GM12878 (cell line): ENCODE measurements at regions of chr16 and their contacts with region 1.

Region 1: DNA sequence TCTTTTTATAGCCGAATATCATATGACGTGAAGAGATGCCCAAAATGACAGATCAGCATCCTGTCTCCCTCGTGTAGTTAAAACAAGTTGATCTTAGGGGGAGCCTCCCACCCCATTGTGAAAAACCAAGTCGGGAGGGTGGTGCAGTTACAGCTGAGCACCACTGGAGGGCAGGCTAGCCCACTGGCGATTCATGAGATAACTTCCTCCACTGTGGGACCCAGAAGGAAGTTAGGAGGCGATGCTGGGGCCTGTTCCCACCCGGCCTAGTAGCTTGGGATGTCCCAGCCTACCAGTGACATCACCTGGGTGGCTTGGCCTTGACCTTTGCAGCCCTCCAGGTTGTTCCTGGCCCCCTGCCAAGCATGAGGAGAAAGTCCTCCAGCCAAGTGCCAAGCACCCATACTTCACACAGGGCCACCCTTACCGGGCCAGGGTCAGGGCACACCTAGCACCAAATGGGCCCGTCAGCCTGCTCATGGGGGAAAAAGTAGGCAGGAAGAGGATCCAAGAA is 8.1 kb upstream of the CPNE2 start:
- DNase-seq: peak; percentile 25
- ATAC-seq: peak; percentile 89
- H3K4me3 ChIP-seq: no peak overlapping the region
- H3K27ac ChIP-seq: no peak overlapping the region
- H3K4me1 ChIP-seq: no peaks in the 10 kb centered on the region
- H3K27me3 ChIP-seq: no peaks in the 10 kb centered on the region
- CTCF ChIP-seq: peak; percentile 95 to 100 (median 98)
- EP300 ChIP-seq: no peak
- POLR2A ChIP-seq: peak; percentile 54
- RAD21 ChIP-seq: peak; percentile 95

Region 2: GRCh38 chr16:57066625-57067024 is 17.7 kb before region 1 on chr16:
- CTCF ChIA-PET with region 1: interaction called, 10 read pairs
- POLR2A ChIA-PET with region 1: interaction called, 3 read pairs
- RAD21 ChIA-PET with region 1: no interaction called
- SMC1A ChIA-PET with region 1: interaction called, 3 read pairs
- in situ Hi-C with region 1: no loop called
- intact Hi-C with region 1: no loop called
- DNase-seq: no peak
- ATAC-seq: peak; percentile 78
- H3K4me3 ChIP-seq: no peak overlapping the region
- H3K27ac ChIP-seq: no peak overlapping the region
- H3K4me1 ChIP-seq: peaks cover 17% of the 10 kb centered on the region
- H3K27me3 ChIP-seq: no peaks in the 10 kb centered on the region
- CTCF ChIP-seq: no peak
- EP300 ChIP-seq: no peak
- POLR2A ChIP-seq: 0 out of 2 replicates have a peak, but pooled peaks have one; percentile 6
- RAD21 ChIP-seq: no peak

Region 3: GRCh38 chr16:57071831-57072582 is 12.3 kb before region 1 on chr16:
- CTCF ChIA-PET with region 1: interaction called, 13 read pairs
- POLR2A ChIA-PET with region 1: interaction called, 3 read pairs
- RAD21 ChIA-PET with region 1: no interaction called
- SMC1A ChIA-PET with region 1: interaction called, 3 read pairs
- in situ Hi-C with region 1: no loop called
- intact Hi-C with region 1: no loop called
- DNase-seq: no peak
- ATAC-seq: peak; percentile 18
- H3K4me3 ChIP-seq: no peak overlapping the region
- H3K27ac ChIP-seq: no peak overlapping the region
- H3K4me1 ChIP-seq: peaks cover 5% of the 10 kb centered on the region; the same call in 1 of the 2 replicates
- H3K27me3 ChIP-seq: no peaks in the 10 kb centered on the region
- CTCF ChIP-seq: no peak
- EP300 ChIP-seq: no peak
- POLR2A ChIP-seq: no peak
- RAD21 ChIP-seq: no peak

Region 4: DNA sequence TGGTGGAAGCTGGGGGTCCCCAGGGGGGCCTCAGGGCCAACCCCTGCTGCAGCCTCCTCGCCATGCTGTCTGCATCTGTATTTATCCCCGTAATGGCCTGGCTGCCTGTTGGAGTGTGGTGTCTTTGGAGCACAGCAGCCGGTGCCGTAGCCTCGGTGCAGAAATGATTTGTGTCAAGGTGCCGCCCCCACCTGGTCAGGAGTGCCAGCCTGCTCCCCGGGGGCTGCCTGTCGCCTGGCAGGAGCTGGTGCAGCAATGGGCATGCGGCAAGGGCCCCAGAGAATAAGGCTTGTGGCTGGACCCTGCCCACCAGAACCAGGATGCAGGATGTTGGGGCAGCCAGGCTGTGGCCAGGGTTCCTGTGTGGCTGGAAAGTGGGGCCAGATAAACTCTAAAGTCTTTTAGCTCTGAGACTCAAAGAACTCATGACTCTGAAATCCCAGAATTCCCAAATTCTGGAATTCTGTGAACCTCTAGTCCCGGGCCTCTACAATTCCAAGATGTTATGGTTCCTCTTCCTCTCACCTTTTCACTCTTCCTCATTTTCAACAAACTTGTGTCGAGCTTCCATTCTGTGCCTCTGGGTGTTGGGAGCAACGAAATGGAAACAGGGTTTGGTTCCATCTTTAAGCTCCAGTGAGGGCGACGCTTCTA is 14.0 kb after region 1 on chr16:
- CTCF ChIA-PET with region 1: interaction called, 18 read pairs
- POLR2A ChIA-PET with region 1: interaction called, 7 read pairs
- RAD21 ChIA-PET with region 1: interaction called, 3 read pairs
- SMC1A ChIA-PET with region 1: interaction called, 5 read pairs
- in situ Hi-C with region 1: no loop called
- intact Hi-C with region 1: no loop called
- DNase-seq: no peak
- ATAC-seq: no peak
- H3K4me3 ChIP-seq: no peak overlapping the region
- H3K27ac ChIP-seq: no peak overlapping the region
- H3K4me1 ChIP-seq: no peaks in the 10 kb centered on the region; the same call in 1 of the 2 replicates
- H3K27me3 ChIP-seq: no peaks in the 10 kb centered on the region; a peak in 2 of 4 replicates
- CTCF ChIP-seq: no peak
- EP300 ChIP-seq: no peak
- POLR2A ChIP-seq: no peak
- RAD21 ChIP-seq: no peak

Region 5: DNA sequence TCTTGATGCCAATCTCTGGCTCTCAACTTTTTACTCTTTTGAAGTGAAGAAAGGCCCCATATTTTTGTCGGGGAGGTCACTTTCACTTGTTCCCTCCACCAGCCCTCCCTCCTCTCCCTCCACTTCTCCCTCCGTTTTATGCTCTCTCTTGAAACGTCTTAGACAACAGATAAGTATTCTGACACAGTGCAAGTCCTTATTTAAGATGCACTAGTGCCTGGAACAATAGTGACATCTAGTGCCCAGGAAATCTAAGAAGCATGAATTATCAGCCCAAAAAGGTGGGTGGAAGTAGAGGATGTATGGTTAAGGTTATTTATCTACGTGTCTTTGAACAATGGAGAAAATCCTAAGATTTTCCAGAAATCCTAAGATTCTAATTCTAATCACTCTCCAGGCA is 83.6 kb after region 1 on chr16:
- CTCF ChIA-PET with region 1: interaction called, 32 read pairs
- POLR2A ChIA-PET with region 1: interaction called, 3 read pairs
- RAD21 ChIA-PET with region 1: interaction called, 7 read pairs
- SMC1A ChIA-PET with region 1: interaction called, 6 read pairs
- in situ Hi-C with region 1: loop called (anchors 5 kb)
- intact Hi-C with region 1: loop called (anchors 1 kb)
- DNase-seq: no peak
- ATAC-seq: peak; percentile 90
- H3K4me3 ChIP-seq: no peak overlapping the region
- H3K27ac ChIP-seq: no peak overlapping the region; the same call in 1 of the 2 replicates
- H3K4me1 ChIP-seq: peaks cover 19% of the 10 kb centered on the region
- H3K27me3 ChIP-seq: no peaks in the 10 kb centered on the region
- CTCF ChIP-seq: peak; percentile 61 to 82 (median 65)
- EP300 ChIP-seq: no peak
- POLR2A ChIP-seq: no peak
- RAD21 ChIP-seq: peak; percentile 96